H1 (cell line): ENCODE measurements at regions of chr9 and their contacts with region 1.

Region 1: DNA sequence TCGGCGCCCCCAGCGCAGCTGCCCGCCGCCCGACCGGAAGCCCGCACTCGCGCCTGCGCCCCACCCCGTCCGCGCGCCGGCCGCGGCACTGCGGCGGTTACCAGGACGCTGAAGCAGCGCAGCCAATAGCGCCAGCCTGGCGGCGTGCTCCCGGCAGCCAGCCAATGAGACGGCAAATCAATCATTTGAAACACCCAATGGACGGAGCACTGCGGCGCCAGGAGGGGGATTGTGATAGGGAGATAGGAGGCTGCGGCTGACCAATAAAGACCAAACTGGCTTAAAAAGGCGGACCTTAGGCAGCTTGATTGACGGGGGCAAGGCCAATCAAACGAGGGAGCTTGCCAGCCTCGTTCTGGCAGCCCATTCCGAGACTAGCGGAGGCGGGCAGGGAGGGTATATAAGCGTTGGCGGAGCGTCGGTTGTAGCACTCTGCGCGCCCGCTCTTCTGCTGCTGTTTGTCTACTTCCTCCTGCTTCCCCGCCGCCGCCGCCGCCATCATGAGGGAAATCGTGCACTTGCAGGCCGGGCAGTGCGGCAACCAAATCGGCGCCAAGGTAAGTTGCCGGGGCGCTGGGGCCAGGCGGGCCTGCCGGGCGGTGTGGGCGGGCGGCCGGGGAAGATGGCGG is at the start of gene TUBB4B:
- DNase-seq: peak; percentile 94 to 100
- H3K4me3 ChIP-seq: peak within 1 kb of the TSS; percentile 64 to 92 (median 76)
- H3K27ac ChIP-seq: peak within 1 kb of the TSS; percentile 67; the same call in 1 of the 2 replicates
- H3K4me1 ChIP-seq: peaks cover 0 to 27% (median 21%) of the 10 kb centered on the region in 4 experiments; a peak in 6 of 7 replicates
- H3K27me3 ChIP-seq: no peaks in the 10 kb centered on the region
- CTCF ChIP-seq: no peak
- EP300 ChIP-seq: no peak
- POLR2A ChIP-seq: peak in 1 of 2 experiments; percentile 99; a peak in 2 of 3 replicates
- RAD21 ChIP-seq: no peak
- total RNA-seq, gene TUBB4B: 307 and 311 TPM in 2 replicates

Region 2: DNA sequence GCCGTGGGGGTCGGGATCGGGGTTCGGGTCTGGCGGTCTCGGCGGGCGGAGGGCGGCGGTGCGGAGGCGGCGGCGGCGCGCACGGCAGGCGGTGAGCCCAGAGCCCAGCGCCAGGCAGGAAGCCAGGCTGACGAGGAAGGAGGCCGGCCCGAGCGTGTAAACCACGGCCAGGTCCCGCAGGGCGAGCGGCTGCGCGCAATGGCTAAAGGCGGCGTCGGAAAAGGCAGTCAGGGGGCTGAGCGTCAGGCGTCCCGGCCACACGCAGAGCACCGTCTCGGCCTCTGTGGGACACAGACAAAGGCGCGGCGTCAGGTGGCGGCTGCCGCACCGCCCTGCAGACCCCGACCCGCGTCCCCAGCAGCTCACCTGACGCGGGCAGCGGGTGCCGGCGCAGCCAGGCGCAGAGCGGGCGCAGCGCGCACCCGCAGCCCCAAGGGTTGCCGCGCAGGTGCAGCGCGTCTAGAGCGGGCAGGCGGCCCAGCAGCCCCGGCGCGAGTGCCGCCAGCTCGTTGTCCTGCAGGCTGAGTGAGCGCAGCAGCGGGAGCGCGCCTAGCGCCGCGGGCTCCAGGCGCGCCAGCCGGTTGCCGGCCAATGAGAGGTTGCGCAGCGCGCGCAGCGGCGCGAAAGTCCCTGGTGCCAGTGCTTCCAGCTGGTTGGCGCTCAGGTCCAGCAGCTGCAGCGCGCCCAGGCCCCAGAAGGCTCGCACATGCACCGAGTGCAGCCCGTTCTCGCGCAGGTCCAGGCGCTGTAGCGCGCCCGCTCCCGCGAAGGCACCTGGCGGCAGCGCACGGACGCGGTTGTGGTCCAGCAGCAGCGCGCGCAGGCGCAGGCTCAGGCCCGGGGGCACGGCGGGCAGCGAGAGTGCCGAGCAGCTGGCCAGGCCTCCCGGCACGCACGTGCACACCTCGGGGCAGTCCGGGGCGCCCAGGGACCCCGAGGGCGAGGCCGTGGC is 71.8 kb before region 1 on chr9:
- CTCF ChIA-PET with region 1: interaction called, 29 read pairs
- POLR2A ChIA-PET with region 1: interaction called, 9 read pairs
- DNase-seq: peak in 1 of 2 experiments; percentile 89
- H3K4me3 ChIP-seq: peak overlapping the region; percentile 35 to 65 (median 49)
- H3K27ac ChIP-seq: no peak overlapping the region
- H3K4me1 ChIP-seq: peaks cover 0 to 16% (median 11%) of the 10 kb centered on the region in 4 experiments; a peak in 6 of 7 replicates
- H3K27me3 ChIP-seq: peaks cover 38 to 84% (median 68%) of the 10 kb centered on the region in 4 experiments
- CTCF ChIP-seq: no peak
- EP300 ChIP-seq: no peak
- POLR2A ChIP-seq: no peak
- RAD21 ChIP-seq: no peak; a peak in 1 of 4 replicates

Region 3: GRCh38 chr9:137200311-137201204 is 40.4 kb before region 1 on chr9 and contains the start of gene TPRN:
- CTCF ChIA-PET with region 1: interaction called, 204 read pairs
- POLR2A ChIA-PET with region 1: interaction called, 1,462 read pairs
- DNase-seq: peak; percentile 96 to 97
- H3K4me3 ChIP-seq: peak within 1 kb of the TSS; percentile 64 to 78 (median 69)
- H3K27ac ChIP-seq: no peak within 1 kb of the TSS; the same call in 1 of the 2 replicates
- H3K4me1 ChIP-seq: peaks cover 8 to 28% (median 18%) of the 10 kb centered on the region in 4 experiments
- H3K27me3 ChIP-seq: no peaks in the 10 kb centered on the region
- CTCF ChIP-seq: no peak
- EP300 ChIP-seq: no peak
- POLR2A ChIP-seq: peak in 1 of 2 experiments; percentile 88; a peak in 2 of 3 replicates
- RAD21 ChIP-seq: no peak
- total RNA-seq, gene TPRN: 23.2 and 27.2 TPM in 2 replicates

Region 4: DNA sequence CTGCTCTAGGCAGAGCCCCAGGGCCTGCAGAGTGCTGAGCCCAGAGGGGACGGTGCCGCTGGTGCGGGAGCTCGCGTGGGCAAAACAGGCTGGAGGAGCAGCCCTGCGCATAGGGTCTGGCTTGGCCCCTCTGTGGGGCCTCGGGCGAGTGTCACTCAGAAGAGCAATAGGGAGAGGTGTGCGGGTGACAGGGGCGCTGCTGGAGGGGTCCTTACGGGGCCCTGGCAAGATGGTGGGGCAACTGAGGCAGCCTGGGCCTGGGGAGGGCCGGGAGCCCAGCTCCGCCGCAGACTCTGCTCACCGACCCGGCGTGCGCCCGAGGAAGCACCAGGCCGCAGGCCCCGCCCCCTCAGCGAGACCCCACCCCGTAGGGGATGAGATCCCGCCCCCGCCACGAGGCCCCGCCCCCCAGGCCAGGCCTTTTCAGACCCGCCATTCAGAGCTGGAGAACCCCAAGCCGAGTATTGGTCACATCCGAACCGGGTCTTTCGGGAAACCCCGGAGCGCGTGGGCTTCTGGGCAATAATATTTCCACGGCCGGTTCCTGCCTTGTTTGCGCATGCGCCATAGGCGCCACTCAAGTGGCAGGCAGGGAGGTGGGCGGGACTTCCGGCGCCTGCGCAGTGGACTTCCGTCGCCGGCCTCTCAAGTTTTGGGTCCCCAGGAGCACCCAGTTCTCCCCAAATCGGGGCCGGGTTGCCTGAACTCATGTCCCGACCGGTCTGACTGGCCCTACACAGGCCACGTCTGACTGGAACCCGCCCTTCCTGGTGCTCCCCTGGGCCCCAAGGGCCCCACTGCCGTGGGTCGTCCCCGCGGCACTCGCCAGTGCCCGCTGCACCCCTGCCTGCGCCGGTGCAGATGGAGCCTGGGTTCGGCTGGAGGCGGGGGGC is 17.7 kb before region 1 on chr9:
- CTCF ChIA-PET with region 1: interaction called, 113 read pairs
- POLR2A ChIA-PET with region 1: interaction called, 1,462 read pairs
- DNase-seq: peak; percentile 96 to 99
- H3K4me3 ChIP-seq: peak overlapping the region; percentile 67 to 92 (median 79)
- H3K27ac ChIP-seq: no peak overlapping the region
- H3K4me1 ChIP-seq: peaks cover 0 to 20% (median 10%) of the 10 kb centered on the region in 4 experiments; a peak in 5 of 7 replicates
- H3K27me3 ChIP-seq: no peaks in the 10 kb centered on the region; a peak in 2 of 7 replicates
- CTCF ChIP-seq: no peak
- EP300 ChIP-seq: no peak
- POLR2A ChIP-seq: peak in 1 of 2 experiments; percentile 53; a peak in 1 of 3 replicates
- RAD21 ChIP-seq: no peak

Region 5: DNA sequence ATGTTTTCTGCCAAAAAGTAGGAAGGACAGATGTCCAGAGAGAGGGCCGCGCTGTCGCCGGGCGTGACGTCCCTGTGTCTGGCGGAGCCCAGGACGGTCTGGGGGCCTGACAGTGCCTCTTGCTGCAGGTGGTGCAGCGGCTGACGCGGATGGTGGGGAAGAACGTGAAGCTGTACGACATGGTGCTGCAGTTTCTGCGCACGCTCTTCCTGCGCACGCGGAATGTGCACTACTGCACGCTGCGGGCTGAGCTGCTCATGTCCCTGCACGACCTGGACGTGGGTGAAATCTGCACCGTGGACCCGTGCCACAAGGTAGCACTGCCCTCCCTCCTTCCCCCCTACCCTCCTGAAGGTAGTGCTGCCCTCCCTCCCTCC is 21.9 kb after region 1 on chr9:
- CTCF ChIA-PET with region 1: interaction called, 29 read pairs
- POLR2A ChIA-PET with region 1: interaction called, 1,462 read pairs
- DNase-seq: no peak
- H3K4me3 ChIP-seq: no peak overlapping the region
- H3K27ac ChIP-seq: no peak overlapping the region
- H3K4me1 ChIP-seq: no peaks in the 10 kb centered on the region
- H3K27me3 ChIP-seq: no peaks in the 10 kb centered on the region
- CTCF ChIP-seq: no peak
- EP300 ChIP-seq: no peak
- POLR2A ChIP-seq: no peak
- RAD21 ChIP-seq: no peak